GM13976 (cell line): ENCODE measurements at regions of chr10 and their contacts with region 1.

Region 1: DNA sequence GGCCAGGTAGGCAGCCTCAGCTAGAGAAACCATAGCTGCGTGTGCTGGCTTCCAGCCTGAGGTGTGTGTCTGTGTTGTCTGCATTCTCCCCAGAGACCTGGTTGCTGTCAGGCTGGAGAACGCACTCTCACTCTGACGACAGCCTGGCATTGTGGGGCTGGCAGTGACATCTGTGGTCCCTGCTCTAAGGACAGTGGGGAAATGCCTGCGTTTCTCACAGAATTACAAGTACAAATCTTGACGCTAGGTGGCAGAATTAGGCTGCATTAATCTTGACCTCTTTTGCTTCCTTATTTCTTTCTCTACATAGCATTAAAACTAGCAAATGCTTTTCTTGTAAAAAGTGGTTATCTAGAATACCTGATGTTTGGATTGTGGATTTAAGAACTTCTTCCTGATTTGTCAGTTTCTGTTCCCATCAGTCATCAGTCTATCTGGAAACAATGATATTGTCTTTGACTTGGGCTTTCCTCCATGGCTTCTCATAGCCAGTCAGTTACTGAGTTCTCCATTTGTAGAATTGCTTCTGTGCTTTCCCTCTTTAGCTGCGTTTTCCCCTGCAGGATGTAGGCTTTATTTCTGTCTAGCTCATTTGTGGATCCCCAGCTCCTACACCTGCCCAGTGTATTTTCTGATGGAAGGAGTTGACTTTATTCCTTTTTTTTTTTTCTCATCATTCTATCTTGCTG is 86.0 kb downstream of the FANK1 start:
- DNase-seq: peak; percentile 57
- CTCF ChIP-seq: peak; percentile 47

Region 2: DNA sequence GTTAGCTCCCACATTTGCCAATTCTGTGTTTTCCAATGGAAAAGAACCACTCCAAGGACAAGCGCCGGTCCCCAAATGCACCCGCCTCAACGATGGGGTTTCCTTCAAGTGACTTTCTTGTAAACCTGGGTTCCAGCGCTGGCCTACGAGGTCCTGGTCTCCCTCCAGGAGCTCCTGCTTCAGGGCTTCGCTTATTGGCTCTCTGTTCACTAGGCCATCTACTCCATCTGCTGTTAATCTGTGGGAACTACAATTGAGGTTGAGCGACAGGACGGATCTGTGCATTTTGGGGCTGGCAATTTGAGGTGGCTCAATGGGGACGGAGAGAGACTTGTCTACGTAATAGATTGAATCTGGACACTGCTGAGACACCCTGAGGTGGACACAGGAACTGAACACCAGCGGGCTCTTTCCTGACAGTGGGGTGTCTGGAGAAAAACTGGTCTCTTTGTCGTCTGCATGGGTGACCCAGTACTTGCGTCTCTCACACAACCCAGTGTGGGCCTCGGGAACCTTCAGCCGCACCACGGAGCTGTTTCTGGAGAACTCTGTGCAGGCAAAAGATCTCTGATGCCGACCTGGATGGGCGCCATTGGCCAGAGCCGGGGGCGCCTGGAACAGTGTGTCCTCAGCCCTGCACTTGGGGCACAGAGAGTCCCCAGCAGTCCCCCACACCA is 521.8 kb after region 1 on chr10:
- in situ Hi-C with region 1: loop called (anchors 25 kb)
- DNase-seq: peak; percentile 49
- CTCF ChIP-seq: peak; percentile 29